ENCODE measurements at regions of chr2 and their contacts with region 1.

Region 1: DNA sequence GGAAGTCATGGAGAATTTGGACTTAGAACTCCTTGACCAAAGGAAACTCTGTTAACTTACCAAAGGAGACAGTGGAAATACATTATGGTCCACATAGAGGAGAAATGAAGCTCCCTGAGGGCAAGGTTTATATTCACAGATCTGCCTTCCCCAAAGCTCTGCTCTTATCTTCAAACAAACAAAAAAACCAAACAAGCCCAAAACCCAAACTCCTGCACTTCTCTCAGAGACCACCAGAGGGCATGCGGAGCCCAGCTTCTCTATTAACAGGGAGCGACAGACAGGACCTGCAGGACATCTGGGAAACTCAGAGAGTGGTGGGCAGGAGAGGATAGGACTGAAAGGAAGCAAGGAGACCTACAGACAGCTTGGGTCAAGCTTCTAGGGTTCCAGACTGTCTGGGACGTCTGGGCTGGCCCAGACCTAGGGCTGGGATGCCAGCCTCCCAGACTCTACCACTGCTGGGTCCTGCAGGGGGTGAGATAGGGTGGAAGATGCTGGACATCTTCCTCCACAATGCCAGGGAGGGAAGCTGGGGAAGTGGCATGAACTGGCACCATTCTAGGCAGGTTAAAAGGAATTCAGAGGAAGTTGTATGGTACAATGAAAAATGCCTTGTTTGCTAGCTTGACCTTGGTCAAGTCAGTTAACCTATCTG is 4.0 kb upstream of the WNT10A start:
- DNase-seq: no peak
- H3K27ac ChIP-seq: no peak overlapping the region
- CTCF ChIP-seq: peak; percentile 94

Region 2: DNA sequence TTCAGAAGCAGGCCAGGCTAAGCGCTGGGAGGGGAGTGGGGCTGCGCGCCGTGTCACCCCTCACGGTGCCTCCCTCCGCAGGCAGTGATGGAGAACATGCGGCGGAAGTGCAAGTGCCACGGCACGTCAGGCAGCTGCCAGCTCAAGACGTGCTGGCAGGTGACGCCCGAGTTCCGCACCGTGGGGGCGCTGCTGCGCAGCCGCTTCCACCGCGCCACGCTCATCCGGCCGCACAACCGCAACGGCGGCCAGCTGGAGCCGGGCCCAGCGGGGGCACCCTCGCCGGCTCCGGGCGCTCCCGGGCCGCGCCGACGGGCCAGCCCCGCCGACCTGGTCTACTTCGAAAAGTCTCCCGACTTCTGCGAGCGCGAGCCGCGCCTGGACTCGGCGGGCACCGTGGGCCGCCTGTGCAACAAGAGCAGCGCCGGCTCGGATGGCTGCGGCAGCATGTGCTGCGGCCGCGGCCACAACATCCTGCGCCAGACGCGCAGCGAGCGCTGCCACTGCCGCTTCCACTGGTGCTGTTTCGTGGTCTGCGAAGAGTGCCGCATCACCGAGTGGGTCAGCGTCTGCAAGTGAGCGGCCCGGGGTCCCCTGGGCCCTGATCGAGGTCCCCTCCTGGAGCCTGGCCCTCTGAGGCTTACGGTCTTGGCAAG is 16.1 kb after region 1 on chr2:
- CTCF ChIA-PET with region 1: interaction called, 413 read pairs
- POLR2A ChIA-PET with region 1: interaction called, 5 read pairs
- DNase-seq: peak; percentile 51
- H3K27ac ChIP-seq: peak overlapping the region; percentile 84
- CTCF ChIP-seq: peak; percentile 77

Region 3: GRCh38 chr2:218995972-218996711 is 119.5 kb after region 1 on chr2:
- CTCF ChIA-PET with region 1: interaction called, 16 read pairs
- POLR2A ChIA-PET with region 1: no interaction called
- DNase-seq: peak; percentile 90
- H3K27ac ChIP-seq: no peak overlapping the region
- CTCF ChIP-seq: peak; percentile 90

Measured in RWPE1 (cell line).